Mammary epithelial cell (primary cell): ENCODE measurements at regions of chr1 and their contacts with region 1.

Region 1: DNA sequence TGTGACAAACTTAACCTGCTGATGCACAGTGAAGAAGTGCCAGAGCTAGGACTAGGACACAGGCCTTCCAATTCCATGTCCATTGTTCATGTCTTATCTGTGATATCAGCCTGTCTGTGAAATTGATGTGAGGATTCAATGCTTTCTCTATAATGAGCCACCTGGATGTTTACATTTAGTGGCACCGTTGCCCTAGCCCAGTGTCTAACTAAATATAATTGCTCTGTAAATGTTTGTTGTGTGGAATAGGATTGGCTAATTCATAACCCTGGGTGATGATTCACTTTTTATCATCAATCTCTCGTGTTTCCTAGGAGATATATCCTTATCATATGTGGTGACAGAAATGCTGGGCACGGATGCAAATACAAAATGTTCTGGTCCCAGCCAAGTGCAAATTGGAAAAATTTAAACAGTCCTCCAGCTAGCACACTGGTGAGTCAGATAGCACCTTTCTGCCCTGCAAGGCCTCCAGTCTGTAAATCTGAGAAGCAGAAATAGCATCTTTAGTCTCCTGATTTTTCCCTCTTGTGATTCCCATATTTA is 46.9 kb upstream of the GNG12 start:
- DNase-seq: peak; percentile 49
- H3K4me3 ChIP-seq: no peak overlapping the region
- H3K27ac ChIP-seq: no peak overlapping the region
- H3K4me1 ChIP-seq: peaks cover 25% of the 10 kb centered on the region
- H3K27me3 ChIP-seq: no peaks in the 10 kb centered on the region
- CTCF ChIP-seq: no peak

Region 2: GRCh38 chr1:67921725-67922489 is 41.8 kb after region 1 on chr1:
- CTCF ChIA-PET with region 1: no interaction called
- dilution Hi-C with region 1: no loop called
- in situ Hi-C with region 1: no loop called
- intact Hi-C with region 1: loop called (anchors 5 kb)
- DNase-seq: peak; percentile 95
- H3K4me3 ChIP-seq: no peak overlapping the region
- H3K27ac ChIP-seq: peak overlapping the region; percentile 26
- H3K4me1 ChIP-seq: peaks cover 14% of the 10 kb centered on the region
- H3K27me3 ChIP-seq: no peaks in the 10 kb centered on the region
- CTCF ChIP-seq: no peak